ENCODE measurements at regions of chr4 and their contacts with region 1.

Region 1: DNA sequence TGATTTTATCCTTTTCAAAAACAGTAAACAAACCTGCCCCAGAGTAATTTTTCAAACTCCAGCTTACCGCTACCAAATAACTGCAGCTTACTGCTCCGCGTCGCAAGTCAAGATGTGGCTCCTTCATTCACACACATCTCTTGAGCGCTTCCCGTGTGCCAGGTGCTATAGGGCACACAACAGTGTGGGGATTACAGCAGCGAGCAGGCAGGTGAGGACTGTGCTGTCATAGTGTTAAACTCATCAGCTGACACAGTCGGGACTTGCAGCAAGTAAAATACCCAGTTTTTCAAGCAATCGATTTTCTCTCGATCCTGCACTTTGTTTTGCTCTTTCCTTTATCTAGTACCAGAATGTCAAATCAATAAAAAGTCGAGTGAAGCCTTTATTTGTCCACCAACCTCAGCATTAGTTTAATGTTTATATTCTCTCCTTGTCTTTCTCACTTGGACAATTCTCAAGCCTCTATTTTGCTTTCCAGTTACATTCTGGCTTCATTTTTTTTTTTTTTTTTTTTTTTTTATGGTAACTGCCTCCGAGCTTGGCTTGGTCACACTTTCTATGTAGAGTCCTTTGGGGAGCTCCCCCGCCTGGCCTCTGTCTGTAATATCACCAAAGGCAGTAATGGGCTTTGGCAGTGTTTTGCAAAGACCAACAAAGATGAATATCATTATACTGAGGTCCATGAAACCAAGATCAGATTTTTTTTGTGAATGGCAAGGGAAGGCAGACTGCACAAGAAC is 8.3 kb upstream of the ASB5 start:
- DNase-seq: no peak

Region 2: GRCh38 chr4:176123710-176124407 is 153.5 kb before region 1 on chr4:
- intact Hi-C with region 1: no loop called
- DNase-seq: no peak

Region 3: DNA sequence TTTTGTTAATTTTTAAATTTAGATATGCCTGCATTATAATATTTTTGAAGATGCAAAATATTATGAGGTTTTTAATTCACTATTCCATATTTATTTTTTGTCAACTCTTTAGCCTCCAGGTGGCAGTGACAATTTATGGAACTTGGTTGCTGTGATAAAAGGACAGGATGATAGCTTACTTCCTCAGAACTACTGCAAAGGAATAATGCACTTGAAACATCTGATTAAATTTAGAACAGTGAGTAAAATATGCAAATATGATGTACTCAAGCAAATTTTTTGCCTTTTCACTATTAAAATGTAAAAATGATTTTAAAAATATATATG is 127.0 kb before region 1 on chr4:
- intact Hi-C with region 1: loop called (anchors 2 kb)
- DNase-seq: no peak

Region 4: DNA sequence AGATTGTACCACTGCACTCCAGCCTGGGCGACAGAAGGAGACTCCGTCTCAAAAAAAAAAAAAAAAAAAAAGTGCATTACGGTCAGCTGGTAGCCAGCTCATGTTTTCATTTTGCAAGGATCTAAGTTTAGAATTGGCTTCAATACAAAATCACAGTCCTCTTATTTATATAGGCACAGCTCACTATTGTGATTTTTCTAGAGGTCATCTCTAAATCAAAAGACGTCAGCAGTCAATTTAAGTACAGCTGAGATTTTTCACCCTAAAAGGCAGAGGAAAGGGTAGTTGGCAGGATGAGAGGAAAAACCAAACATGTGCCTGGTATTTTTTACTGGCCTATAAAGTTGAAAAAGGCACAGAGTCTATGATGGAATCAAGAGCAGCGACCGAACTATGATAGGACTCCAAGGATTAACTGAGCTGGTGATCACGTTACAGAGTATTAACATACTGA is 39.1 kb before region 1 on chr4:
- intact Hi-C with region 1: loop called (anchors 5 kb)
- DNase-seq: no peak

Region 5: DNA sequence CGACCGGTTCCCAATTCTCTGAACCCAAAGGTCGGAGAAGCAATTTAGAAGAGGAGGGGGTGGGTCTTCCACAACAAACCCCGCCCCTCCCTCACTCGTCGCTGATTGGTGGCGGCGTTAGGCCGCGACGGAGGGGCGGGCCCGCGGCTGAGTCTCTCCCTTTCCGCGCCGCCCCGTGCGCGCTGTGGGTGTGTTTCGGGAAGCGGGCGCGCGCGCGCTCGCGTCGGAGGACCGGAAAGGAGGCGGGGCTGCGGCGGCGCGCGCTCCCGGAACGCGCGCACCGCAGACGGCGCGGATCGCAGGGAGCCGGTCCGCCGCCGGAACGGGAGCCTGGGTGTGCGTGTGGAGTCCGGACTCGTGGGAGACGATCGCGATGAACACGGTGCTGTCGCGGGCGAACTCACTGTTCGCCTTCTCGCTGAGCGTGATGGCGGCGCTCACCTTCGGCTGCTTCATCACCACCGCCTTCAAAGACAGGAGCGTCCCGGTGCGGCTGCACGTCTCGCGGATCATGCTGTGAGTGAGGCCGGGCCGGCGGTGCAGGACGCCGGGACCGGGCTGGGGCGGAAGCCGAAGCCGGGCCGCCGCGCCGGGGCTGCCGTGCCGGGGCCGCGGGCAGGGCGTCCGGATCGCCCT is 42.5 kb after region 1 on chr4 and contains the start of gene SPCS3:
- intact Hi-C with region 1: loop called (anchors 5 kb)
- DNase-seq: peak; percentile 99
- total RNA-seq, gene SPCS3: 115 TPM

Region 6: DNA sequence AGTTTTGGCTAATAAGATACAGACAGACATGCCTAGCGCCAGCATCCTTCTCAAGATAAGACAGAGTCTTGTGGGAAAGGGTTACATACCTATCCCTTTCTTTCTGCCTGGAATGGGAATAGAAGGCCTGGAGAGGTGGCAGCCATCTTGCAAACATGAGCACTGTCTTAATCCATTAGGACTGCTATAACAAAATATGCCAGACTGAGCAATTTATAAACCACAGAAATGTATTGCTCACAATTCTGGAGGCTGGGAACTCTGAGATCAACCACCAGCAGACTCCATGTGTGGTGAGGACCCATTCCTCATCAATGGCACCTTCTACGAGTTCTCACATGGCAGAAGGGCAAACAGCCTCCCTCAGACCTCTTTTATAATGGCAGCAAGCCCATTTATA is 1005.8 kb after region 1 on chr4:
- intact Hi-C with region 1: no loop called
- DNase-seq: no peak

Measured in cardiac septum (tissue), 1 donor.